ENCODE measurements at regions of chr13 and their contacts with region 1.

Region 1: GRCh38 chr13:48222358-48223301 is 10.4 kb upstream of the ITM2B start:
- DNase-seq: peak in 1 of 5 donors; percentile 20
- H3K4me3 ChIP-seq: peak overlapping the region in 1 of 2 donors; percentile 13
- H3K4me3 Mint-ChIP-seq: peak overlapping the region; percentile 57 to 88 (median 81)
- H3K27ac ChIP-seq: peak overlapping the region; percentile 71
- H3K27ac Mint-ChIP-seq: peak overlapping the region; percentile 58 to 98 (median 88)
- H3K4me1 ChIP-seq: peaks cover 62% of the 10 kb centered on the region
- H3K4me1 Mint-ChIP-seq: peaks cover 44 to 63% (median 54%) of the 10 kb centered on the region in 4 donors
- H3K27me3 ChIP-seq: no peaks in the 10 kb centered on the region
- H3K27me3 Mint-ChIP-seq: no peaks in the 10 kb centered on the region

Region 2: DNA sequence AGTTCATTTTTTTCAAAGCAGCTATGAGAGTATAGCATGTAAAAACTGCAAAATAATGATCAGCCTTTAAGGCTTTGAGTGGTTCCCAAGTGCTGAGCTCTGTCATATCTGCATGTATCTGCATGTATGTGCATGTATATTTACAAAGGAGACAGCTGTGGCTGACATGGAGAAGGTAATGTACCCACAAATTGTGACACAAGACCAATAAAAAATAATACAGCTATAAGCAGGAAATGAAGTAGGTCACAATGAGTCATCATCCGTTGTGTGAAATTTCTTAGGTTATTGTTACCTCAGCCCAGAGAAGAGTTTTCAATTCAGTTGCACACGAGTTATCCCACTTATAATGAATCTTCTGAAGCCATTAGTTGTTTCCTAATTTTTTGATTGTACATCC is 66.8 kb before region 1 on chr13:
- CTCF ChIA-PET with region 1: interaction called, 12 read pairs
- POLR2A ChIA-PET with region 1: interaction called, 106 read pairs
- intact Hi-C with region 1: loop called (anchors 1 kb)
- DNase-seq: peak; percentile 69 to 83 (median 81)
- H3K4me3 ChIP-seq: peak overlapping the region in 1 of 2 donors; percentile 46
- H3K4me3 Mint-ChIP-seq: peak overlapping the region; percentile 40 to 84 (median 68)
- H3K27ac ChIP-seq: peak overlapping the region; percentile 78
- H3K27ac Mint-ChIP-seq: peak overlapping the region; percentile 85 to 98 (median 95)
- H3K4me1 ChIP-seq: peaks cover 89% of the 10 kb centered on the region
- H3K4me1 Mint-ChIP-seq: peaks cover 50 to 91% (median 75%) of the 10 kb centered on the region in 4 donors
- H3K27me3 ChIP-seq: no peaks in the 10 kb centered on the region
- H3K27me3 Mint-ChIP-seq: no peaks in the 10 kb centered on the region

Region 3: GRCh38 chr13:48184260-48184659 is 38.4 kb before region 1 on chr13:
- CTCF ChIA-PET with region 1: interaction called, 6 read pairs
- POLR2A ChIA-PET with region 1: interaction called, 47 read pairs
- intact Hi-C with region 1: loop called (anchors 1 kb)
- DNase-seq: no peak
- H3K4me3 ChIP-seq: no peak overlapping the region
- H3K4me3 Mint-ChIP-seq: peak overlapping the region; percentile 2 to 87 (median 39)
- H3K27ac ChIP-seq: no peak overlapping the region
- H3K27ac Mint-ChIP-seq: peak overlapping the region; percentile 74 to 96 (median 80)
- H3K4me1 ChIP-seq: peaks cover 69% of the 10 kb centered on the region
- H3K4me1 Mint-ChIP-seq: peaks cover 45 to 67% (median 56%) of the 10 kb centered on the region in 4 donors
- H3K27me3 ChIP-seq: no peaks in the 10 kb centered on the region
- H3K27me3 Mint-ChIP-seq: no peaks in the 10 kb centered on the region

Region 4: DNA sequence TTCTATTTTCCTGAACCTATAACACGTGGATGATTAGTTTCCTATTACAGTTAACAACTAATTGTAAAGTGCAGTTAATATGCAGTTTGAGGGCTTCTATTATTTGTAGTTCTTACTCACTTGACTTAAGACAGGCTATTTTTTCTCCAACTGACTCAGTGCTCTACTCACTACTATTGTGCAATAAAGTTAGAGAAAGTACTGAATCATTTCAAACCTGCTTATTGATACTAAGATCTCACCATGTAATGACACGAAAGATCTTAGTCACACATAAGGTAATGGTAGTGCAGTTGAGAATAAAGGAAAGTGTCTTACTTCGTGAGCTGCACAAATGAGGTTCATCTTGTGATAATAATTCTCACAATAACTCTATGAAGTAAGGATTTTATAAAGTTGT is 12.5 kb before region 1 on chr13:
- CTCF ChIA-PET with region 1: interaction called, 4 read pairs
- POLR2A ChIA-PET with region 1: interaction called, 13 read pairs
- intact Hi-C with region 1: no loop called
- DNase-seq: no peak
- H3K4me3 ChIP-seq: no peak overlapping the region
- H3K4me3 Mint-ChIP-seq: no peak overlapping the region
- H3K27ac ChIP-seq: no peak overlapping the region
- H3K27ac Mint-ChIP-seq: peak overlapping the region in 1 of 7 donors; percentile 37
- H3K4me1 ChIP-seq: no peaks in the 10 kb centered on the region
- H3K4me1 Mint-ChIP-seq: peaks cover 8 to 21% (median 14%) of the 10 kb centered on the region in 4 donors
- H3K27me3 ChIP-seq: no peaks in the 10 kb centered on the region
- H3K27me3 Mint-ChIP-seq: peaks cover 0 to 1% of the 10 kb centered on the region in 2 donors

Region 5: DNA sequence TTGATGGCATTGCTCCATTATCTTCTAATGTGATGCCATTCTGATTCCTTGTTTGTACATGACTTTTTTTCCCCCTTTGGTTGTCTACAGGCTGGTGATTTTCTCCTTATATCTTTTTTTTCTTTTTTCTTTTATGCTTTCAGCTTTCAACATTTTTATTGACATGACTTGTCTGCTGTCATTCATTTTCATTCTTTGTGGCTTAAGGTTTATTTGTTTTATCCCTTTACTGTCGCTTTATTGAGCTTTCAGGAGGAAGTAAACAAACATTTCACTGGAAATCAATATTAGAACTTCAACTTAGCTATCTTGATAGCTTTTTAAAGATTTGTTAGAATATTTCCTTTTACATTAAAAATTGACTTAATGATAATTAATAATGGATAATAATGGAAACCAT is 20.0 kb after region 1 on chr13:
- CTCF ChIA-PET with region 1: interaction called, 4 read pairs
- POLR2A ChIA-PET with region 1: interaction called, 54 read pairs
- intact Hi-C with region 1: no loop called
- DNase-seq: no peak
- H3K4me3 ChIP-seq: no peak overlapping the region
- H3K4me3 Mint-ChIP-seq: peak overlapping the region in 7 of 8 donors; percentile 28 to 78 (median 48)
- H3K27ac ChIP-seq: no peak overlapping the region
- H3K27ac Mint-ChIP-seq: peak overlapping the region in 6 of 7 donors; percentile 24 to 78 (median 58)
- H3K4me1 ChIP-seq: peaks cover 91% of the 10 kb centered on the region
- H3K4me1 Mint-ChIP-seq: peaks cover 43 to 73% (median 57%) of the 10 kb centered on the region in 4 donors
- H3K27me3 ChIP-seq: no peaks in the 10 kb centered on the region
- H3K27me3 Mint-ChIP-seq: no peaks in the 10 kb centered on the region